ENCODE measurements at regions of chr21 and their contacts with region 1.

Region 1: DNA sequence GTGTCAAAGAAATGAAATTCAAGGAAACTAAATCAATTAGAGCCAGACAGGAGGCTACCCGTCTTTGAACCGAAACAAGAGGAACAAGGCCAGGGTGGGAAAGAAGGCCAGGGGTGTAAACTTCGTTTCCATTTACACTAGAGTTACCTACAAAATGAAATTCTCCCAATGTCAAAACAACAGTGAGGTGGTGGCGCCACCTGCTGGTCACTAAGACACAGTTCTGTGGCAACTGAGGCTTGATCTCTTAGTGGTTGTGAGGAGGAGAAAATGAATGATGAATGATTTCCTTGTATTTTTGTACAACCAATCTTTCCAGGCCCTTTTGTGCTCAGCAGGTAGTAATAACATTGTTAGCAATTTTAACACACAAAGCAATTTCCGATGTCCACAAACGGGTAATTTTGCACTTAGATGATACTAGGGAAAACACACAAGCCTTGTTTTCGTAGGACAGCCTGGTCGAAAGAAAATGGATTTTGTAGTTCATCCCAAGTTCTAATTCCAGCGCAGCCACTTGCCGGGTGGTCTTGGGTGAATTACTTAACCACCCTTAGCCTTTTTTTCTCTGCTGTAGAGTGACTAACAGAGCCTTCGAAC is 54.8 kb upstream of the SOD1 start:
- DNase-seq: peak; percentile 33 to 82 (median 76)
- ATAC-seq: peak; percentile 74
- H3K4me3 ChIP-seq: no peak overlapping the region
- H3K4me3 Mint-ChIP-seq: no peak overlapping the region
- H3K27ac ChIP-seq: no peak overlapping the region
- H3K27ac Mint-ChIP-seq: no peak overlapping the region
- H3K4me1 ChIP-seq: no peaks in the 10 kb centered on the region
- H3K4me1 Mint-ChIP-seq: peaks cover 3% of the 10 kb centered on the region
- H3K27me3 ChIP-seq: no peaks in the 10 kb centered on the region
- H3K27me3 Mint-ChIP-seq: peaks cover 2% of the 10 kb centered on the region
- CTCF ChIP-seq: peak; percentile 89

Region 2: GRCh38 chr21:30044445-30045064 is 1560.1 kb before region 1 on chr21:
- CTCF ChIA-PET with region 1: no interaction called
- POLR2A ChIA-PET with region 1: no interaction called
- intact Hi-C with region 1: loop called in 1 of 2 experiments (anchors 5 kb)
- DNase-seq: peak in 2 of 9 experiments; percentile 2 to 16
- ATAC-seq: no peak
- H3K4me3 ChIP-seq: no peak overlapping the region
- H3K4me3 Mint-ChIP-seq: no peak overlapping the region
- H3K27ac ChIP-seq: no peak overlapping the region
- H3K27ac Mint-ChIP-seq: no peak overlapping the region
- H3K4me1 ChIP-seq: no peaks in the 10 kb centered on the region
- H3K4me1 Mint-ChIP-seq: no peaks in the 10 kb centered on the region
- H3K27me3 ChIP-seq: no peaks in the 10 kb centered on the region
- H3K27me3 Mint-ChIP-seq: peaks cover 3% of the 10 kb centered on the region
- CTCF ChIP-seq: peak; percentile 87

Region 3: GRCh38 chr21:30340441-30341241 is 1264.0 kb before region 1 on chr21:
- CTCF ChIA-PET with region 1: no interaction called
- POLR2A ChIA-PET with region 1: no interaction called
- intact Hi-C with region 1: loop called in 1 of 2 experiments (anchors 5 kb)
- DNase-seq: peak in 6 of 9 experiments; percentile 0 to 28 (median 18)
- ATAC-seq: no peak
- H3K4me3 ChIP-seq: no peak overlapping the region
- H3K4me3 Mint-ChIP-seq: no peak overlapping the region
- H3K27ac ChIP-seq: no peak overlapping the region
- H3K27ac Mint-ChIP-seq: no peak overlapping the region
- H3K4me1 ChIP-seq: no peaks in the 10 kb centered on the region
- H3K4me1 Mint-ChIP-seq: no peaks in the 10 kb centered on the region
- H3K27me3 ChIP-seq: no peaks in the 10 kb centered on the region
- H3K27me3 Mint-ChIP-seq: peaks cover 8% of the 10 kb centered on the region
- CTCF ChIP-seq: peak; percentile 65

Region 4: DNA sequence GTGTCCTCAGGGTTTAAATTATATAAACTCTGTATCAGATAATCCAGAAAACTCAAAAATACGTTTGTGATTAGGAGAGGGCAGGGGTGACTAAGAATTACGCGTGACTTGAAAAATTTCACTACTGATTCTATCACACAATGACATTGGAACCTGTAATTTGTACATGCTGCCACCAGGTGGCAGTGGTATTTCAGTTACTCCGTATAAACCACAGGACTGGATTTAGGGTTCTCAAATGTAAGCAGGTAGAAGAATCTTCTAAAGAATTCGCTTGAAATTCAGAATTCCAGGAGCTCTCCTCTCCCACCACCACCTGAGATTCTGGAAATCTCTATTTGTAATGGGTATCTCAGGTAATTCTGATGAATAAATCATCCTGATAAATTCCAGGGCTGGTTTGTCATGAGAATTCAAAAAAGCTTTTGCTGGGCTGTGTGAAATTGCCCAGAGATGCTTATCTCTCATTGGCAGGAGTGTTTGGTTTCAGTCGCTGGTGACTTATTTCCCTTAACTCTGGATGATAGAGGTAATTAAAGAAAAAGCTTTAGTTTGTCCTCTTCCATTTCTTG is 773.4 kb before region 1 on chr21:
- CTCF ChIA-PET with region 1: no interaction called
- POLR2A ChIA-PET with region 1: no interaction called
- intact Hi-C with region 1: loop called (anchors 5 kb)
- DNase-seq: peak in 5 of 9 experiments; percentile 16 to 56 (median 50)
- ATAC-seq: no peak
- H3K4me3 ChIP-seq: no peak overlapping the region
- H3K4me3 Mint-ChIP-seq: no peak overlapping the region
- H3K27ac ChIP-seq: no peak overlapping the region
- H3K27ac Mint-ChIP-seq: no peak overlapping the region
- H3K4me1 ChIP-seq: no peaks in the 10 kb centered on the region
- H3K4me1 Mint-ChIP-seq: no peaks in the 10 kb centered on the region
- H3K27me3 ChIP-seq: peaks cover 0 to 3% of the 10 kb centered on the region in 2 experiments
- H3K27me3 Mint-ChIP-seq: peaks cover 16% of the 10 kb centered on the region
- CTCF ChIP-seq: peak; percentile 63

Region 5: GRCh38 chr21:31098576-31099005 is 506.1 kb before region 1 on chr21:
- CTCF ChIA-PET with region 1: interaction called, 64 read pairs
- POLR2A ChIA-PET with region 1: no interaction called
- intact Hi-C with region 1: loop called (anchors 1 kb)
- DNase-seq: peak; percentile 54 to 85 (median 73)
- ATAC-seq: peak; percentile 78
- H3K4me3 ChIP-seq: no peak overlapping the region
- H3K4me3 Mint-ChIP-seq: no peak overlapping the region
- H3K27ac ChIP-seq: no peak overlapping the region
- H3K27ac Mint-ChIP-seq: no peak overlapping the region
- H3K4me1 ChIP-seq: no peaks in the 10 kb centered on the region
- H3K4me1 Mint-ChIP-seq: peaks cover 22% of the 10 kb centered on the region
- H3K27me3 ChIP-seq: no peaks in the 10 kb centered on the region
- H3K27me3 Mint-ChIP-seq: no peaks in the 10 kb centered on the region
- CTCF ChIP-seq: peak; percentile 90

Region 6: GRCh38 chr21:31198575-31198974 is 406.1 kb before region 1 on chr21:
- CTCF ChIA-PET with region 1: interaction called, 7 read pairs
- POLR2A ChIA-PET with region 1: no interaction called
- intact Hi-C with region 1: loop called (anchors 1 kb)
- DNase-seq: peak in 2 of 9 experiments; percentile 44 to 63
- ATAC-seq: peak; percentile 44
- H3K4me3 ChIP-seq: no peak overlapping the region
- H3K4me3 Mint-ChIP-seq: no peak overlapping the region
- H3K27ac ChIP-seq: no peak overlapping the region
- H3K27ac Mint-ChIP-seq: no peak overlapping the region
- H3K4me1 ChIP-seq: no peaks in the 10 kb centered on the region
- H3K4me1 Mint-ChIP-seq: peaks cover 18% of the 10 kb centered on the region
- H3K27me3 ChIP-seq: no peaks in the 10 kb centered on the region
- H3K27me3 Mint-ChIP-seq: no peaks in the 10 kb centered on the region
- CTCF ChIP-seq: peak; percentile 72

Region 7: DNA sequence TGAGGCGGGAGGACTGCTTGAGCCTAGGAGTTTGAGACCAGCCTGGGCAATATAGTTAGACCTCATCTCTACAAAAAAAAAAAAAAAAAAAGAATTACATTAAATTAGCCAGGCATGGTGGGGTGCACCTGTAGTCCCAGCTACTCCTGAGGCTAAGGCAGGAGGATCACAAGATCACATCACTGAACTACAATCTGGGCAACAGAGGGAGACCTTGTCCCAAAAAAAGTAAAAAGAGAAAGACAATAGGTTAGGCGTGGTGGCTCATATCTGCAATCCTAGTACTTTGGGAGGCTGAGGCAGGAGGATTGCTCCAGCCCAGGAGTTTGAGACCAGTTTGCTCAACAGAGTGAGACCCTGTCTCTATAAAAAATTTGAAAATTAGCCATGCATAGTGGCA is 390.9 kb before region 1 on chr21:
- CTCF ChIA-PET with region 1: interaction called, 3 read pairs
- POLR2A ChIA-PET with region 1: no interaction called
- intact Hi-C with region 1: loop called (anchors 1 to 5 kb)
- DNase-seq: peak in 2 of 9 experiments; percentile 33 to 42
- ATAC-seq: no peak
- H3K4me3 ChIP-seq: no peak overlapping the region
- H3K4me3 Mint-ChIP-seq: no peak overlapping the region
- H3K27ac ChIP-seq: no peak overlapping the region
- H3K27ac Mint-ChIP-seq: no peak overlapping the region
- H3K4me1 ChIP-seq: no peaks in the 10 kb centered on the region
- H3K4me1 Mint-ChIP-seq: no peaks in the 10 kb centered on the region
- H3K27me3 ChIP-seq: no peaks in the 10 kb centered on the region
- H3K27me3 Mint-ChIP-seq: no peaks in the 10 kb centered on the region
- CTCF ChIP-seq: peak; percentile 25